ENCODE measurements at regions of chr13 and their contacts with region 1.

Region 1: GRCh38 chr13:102773441-102774215 is at the start of gene TEX30:
- DNase-seq: peak; percentile 83 to 85 (median 84)
- ATAC-seq: peak; percentile 95
- H3K4me3 ChIP-seq: peak within 1 kb of the TSS; percentile 86
- H3K27ac ChIP-seq: peak within 1 kb of the TSS; percentile 88
- H3K4me1 ChIP-seq: peaks cover 13 to 26% of the 10 kb centered on the region in 2 experiments; a peak in 4 of 5 replicates
- H3K27me3 ChIP-seq: no peaks in the 10 kb centered on the region
- CTCF ChIP-seq: no peak
- EP300 ChIP-seq: no peak
- POLR2A ChIP-seq: peak; percentile 84
- RAD21 ChIP-seq: no peak
- polyA plus RNA-seq, gene TEX30: 109 to 143 TPM

Region 2: DNA sequence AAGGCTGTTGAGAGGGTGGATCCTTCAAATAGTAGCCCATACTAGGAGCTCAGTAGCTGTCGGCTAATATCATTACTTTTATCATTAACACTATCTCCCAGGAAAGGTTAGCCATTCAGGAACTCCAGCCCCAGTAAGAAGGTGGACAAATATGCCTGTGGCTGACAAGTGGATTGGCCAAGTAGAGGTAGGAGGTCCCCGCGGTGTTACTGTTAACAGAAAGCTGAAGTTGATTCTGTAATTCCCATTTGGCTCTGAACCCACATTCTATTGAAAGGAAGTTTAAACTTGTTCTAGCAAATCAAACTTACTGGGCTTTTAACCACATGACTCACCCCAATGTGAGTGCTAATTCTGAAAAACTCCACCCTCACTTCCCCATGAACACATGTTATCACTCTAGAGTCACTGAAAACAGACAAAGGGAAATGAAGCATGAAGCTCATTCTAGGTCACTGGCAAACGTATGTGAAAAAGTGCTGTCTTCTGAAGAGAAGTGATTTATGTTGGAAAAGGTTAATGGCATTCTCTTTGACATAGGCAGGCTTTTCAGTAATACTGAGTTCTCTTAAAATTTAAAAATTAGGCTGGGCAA is 645.3 kb before region 1 on chr13:
- CTCF ChIA-PET with region 1: no interaction called
- POLR2A ChIA-PET with region 1: no interaction called
- in situ Hi-C with region 1: no loop called
- intact Hi-C with region 1: no loop called
- DNase-seq: no peak
- ATAC-seq: no peak
- H3K4me3 ChIP-seq: no peak overlapping the region
- H3K27ac ChIP-seq: no peak overlapping the region
- H3K4me1 ChIP-seq: no peaks in the 10 kb centered on the region
- H3K27me3 ChIP-seq: no peaks in the 10 kb centered on the region
- CTCF ChIP-seq: no peak
- EP300 ChIP-seq: no peak
- POLR2A ChIP-seq: no peak
- RAD21 ChIP-seq: no peak

Region 3: DNA sequence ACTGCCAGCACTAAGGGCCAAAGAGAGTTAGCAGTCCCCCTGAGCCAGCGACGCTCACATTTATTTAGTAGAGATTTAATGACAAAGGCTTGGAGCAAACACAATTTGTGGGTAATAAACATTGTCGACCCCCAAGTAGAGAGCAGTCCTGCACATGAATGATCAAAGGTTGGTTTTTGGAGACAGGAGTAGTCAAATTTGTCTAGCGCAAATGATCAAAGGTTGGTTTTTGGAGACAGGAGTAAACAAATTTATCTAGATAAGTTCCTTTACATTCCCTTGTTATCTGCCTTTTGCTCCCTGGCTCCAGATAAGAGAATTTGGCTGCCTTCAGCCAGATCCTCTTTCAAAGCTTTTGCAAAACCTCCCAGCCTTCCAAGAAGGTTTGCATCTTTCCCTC is 105.7 kb before region 1 on chr13:
- CTCF ChIA-PET with region 1: no interaction called
- POLR2A ChIA-PET with region 1: no interaction called
- in situ Hi-C with region 1: no loop called
- intact Hi-C with region 1: loop called (anchors 10 kb)
- DNase-seq: no peak
- ATAC-seq: no peak
- H3K4me3 ChIP-seq: no peak overlapping the region
- H3K27ac ChIP-seq: no peak overlapping the region
- H3K4me1 ChIP-seq: peaks cover 0 to 6% of the 10 kb centered on the region in 2 experiments; a peak in 3 of 5 replicates
- H3K27me3 ChIP-seq: no peaks in the 10 kb centered on the region
- CTCF ChIP-seq: no peak
- EP300 ChIP-seq: no peak
- POLR2A ChIP-seq: no peak
- RAD21 ChIP-seq: no peak

Region 4: GRCh38 chr13:102800145-102801041 is 26.8 kb after region 1 on chr13:
- CTCF ChIA-PET with region 1: no interaction called
- POLR2A ChIA-PET with region 1: interaction called, 3 read pairs
- in situ Hi-C with region 1: no loop called
- intact Hi-C with region 1: loop called (anchors 1 kb)
- DNase-seq: peak; percentile 72 to 83 (median 80)
- ATAC-seq: peak; percentile 88
- H3K4me3 ChIP-seq: peak overlapping the region; percentile 76
- H3K27ac ChIP-seq: peak overlapping the region; percentile 76
- H3K4me1 ChIP-seq: peaks cover 4 to 24% of the 10 kb centered on the region in 2 experiments; a peak in 4 of 5 replicates
- H3K27me3 ChIP-seq: no peaks in the 10 kb centered on the region
- CTCF ChIP-seq: peak; percentile 59 to 75 (median 66)
- EP300 ChIP-seq: no peak; the same call in 1 of the 2 replicates
- POLR2A ChIP-seq: peak; percentile 58; the same call in 1 of the 2 replicates
- RAD21 ChIP-seq: peak; percentile 21 to 31; a peak in 2 of 4 replicates